Aorta (tissue), 5 donors: ENCODE measurements at regions of chr11 and their contacts with region 1.

Region 1: DNA sequence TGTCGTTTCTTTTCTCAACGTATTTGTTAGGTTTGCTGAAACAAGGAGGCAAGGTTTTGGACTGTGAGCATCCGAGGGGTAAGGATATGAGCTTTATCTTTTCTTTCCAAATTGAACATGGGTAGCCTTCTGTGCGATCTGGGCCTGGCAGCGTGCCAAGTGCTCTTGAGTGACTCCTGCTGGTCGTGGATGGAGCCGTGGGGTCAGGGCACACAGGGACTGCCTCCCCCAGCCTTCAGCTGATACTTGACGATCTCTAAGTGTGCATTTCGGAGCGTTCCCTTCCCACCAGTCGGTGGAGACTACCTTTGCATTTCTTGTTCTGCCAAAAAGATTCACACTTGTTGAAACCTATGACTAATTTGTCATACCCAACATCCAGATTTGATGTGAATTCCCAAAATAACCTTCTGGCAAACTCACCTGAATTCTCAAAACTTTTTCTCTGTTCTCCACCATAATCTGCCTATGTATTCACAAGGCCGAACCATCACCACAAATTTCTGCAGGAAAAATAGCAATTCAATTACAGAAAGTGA is 40.1 kb upstream of the CLMP start:
- DNase-seq: peak; percentile 57 to 90
- ATAC-seq: no peak
- H3K4me3 ChIP-seq: no peak overlapping the region
- H3K27ac ChIP-seq: no peak overlapping the region
- H3K4me1 ChIP-seq: peaks cover 0 to 1% of the 10 kb centered on the region in 2 donors
- H3K27me3 ChIP-seq: no peaks in the 10 kb centered on the region

Region 2: GRCh38 chr11:123033895-123034294 is 201.3 kb before region 1 on chr11:
- intact Hi-C with region 1: no loop called
- DNase-seq: no peak
- ATAC-seq: peak; percentile 50
- H3K4me3 ChIP-seq: no peak overlapping the region
- H3K27ac ChIP-seq: no peak overlapping the region
- H3K4me1 ChIP-seq: no peaks in the 10 kb centered on the region
- H3K27me3 ChIP-seq: no peaks in the 10 kb centered on the region

Region 3: DNA sequence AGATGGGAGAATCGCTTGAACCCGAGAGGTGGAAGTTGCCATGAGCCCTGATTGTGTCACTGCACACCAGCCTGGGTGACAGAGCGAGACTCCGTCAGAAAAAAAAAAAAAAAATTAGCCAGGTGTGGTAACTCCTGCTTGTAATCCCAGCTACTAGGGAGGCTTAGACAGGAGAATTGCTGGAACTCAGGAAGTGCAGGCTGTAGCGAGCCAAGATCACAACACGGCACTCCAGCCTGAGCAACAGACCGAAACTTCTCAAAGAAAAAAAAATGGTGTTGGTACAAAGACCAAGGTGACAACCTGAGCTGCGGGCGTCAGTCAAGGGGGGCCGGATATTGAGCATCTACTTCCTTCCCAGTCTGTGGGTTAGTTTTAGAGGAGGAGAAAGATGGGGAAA is 124.8 kb before region 1 on chr11:
- intact Hi-C with region 1: loop called in 1 of 2 experiments (anchors 5 kb)
- DNase-seq: no peak
- ATAC-seq: no peak
- H3K4me3 ChIP-seq: no peak overlapping the region
- H3K27ac ChIP-seq: no peak overlapping the region
- H3K4me1 ChIP-seq: no peaks in the 10 kb centered on the region
- H3K27me3 ChIP-seq: no peaks in the 10 kb centered on the region